ENCODE measurements at regions of chr17 and their contacts with region 1.

Region 1: DNA sequence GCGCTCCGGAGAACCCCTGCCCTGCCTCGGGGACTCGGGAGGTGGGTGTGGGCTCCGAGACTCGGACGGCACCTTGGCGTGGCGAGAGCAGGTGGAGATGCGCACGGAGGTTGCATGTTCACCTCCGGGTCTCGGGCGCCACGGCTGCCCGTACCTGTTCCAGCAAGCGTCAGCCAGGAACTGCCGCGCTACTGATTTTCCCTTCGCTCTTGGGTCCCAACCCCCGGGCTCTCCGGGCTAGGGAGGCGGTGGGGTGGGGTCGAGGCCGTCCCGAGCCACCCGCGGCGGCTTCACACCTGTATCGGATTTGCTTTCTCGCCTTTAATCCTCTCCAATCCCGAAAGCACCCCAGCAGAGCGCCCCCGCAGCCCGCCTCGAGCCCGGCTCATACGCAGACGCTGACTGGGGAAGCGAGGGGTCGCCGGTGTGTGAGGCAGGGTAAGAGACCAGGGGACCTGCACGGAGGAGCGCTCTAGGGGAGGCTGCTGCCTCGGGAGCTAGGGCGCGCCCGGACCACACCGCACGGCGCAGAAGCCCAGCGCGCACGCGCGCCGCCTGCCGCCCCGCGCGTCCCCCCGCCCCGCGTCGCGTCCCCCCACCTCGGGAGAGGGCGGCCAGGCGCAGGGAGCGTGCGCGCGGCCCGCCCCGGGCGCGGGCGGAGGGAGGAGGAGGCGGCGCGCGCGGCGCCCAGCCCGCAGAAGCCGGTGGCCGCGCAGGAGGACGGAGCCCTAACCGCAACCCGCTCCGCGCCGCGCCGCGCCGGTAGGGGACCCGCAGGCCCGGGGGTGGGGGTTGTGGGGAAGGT is at the start of gene DUSP14:
- DNase-seq: peak; percentile 65 to 74
- H3K4me3 ChIP-seq: peak within 1 kb of the TSS; percentile 83 to 90 (median 88)
- H3K27ac ChIP-seq: peak within 1 kb of the TSS; percentile 97 to 98
- H3K4me1 ChIP-seq: no peaks in the 10 kb centered on the region
- H3K27me3 ChIP-seq: no peaks in the 10 kb centered on the region
- CTCF ChIP-seq: no peak
- POLR2A ChIP-seq: peak; percentile 16
- total RNA-seq, gene DUSP14: 18.7 to 32.8 (median 24.6) TPM

Region 2: DNA sequence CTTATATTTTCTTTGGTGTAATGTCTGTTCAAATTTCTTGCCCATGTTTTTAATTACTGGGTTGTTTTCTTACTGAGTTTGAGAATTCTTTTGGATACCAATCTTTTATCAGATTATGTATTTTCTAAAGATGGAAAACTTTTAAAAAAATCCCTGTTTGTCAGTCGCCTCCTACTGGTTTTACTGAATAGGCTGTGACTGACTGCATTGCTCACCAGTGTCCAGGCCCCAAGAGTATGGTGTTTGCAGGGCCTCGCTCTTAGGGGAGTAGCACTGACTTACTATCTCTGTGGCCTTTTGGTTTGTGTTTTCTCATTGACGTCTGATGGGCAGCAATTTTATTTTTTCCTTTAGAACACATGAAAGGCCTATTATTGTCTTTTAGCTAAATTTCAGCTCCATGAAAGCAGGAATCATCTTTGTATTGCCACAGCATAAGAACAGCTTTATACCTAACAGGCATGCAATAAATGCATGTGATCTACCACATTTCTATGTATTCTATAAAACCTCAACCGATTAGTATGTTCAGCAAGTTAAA is 352.3 kb before region 1 on chr17:
- intact Hi-C with region 1: no loop called
- DNase-seq: no peak
- H3K4me3 ChIP-seq: no peak overlapping the region
- H3K27ac ChIP-seq: no peak overlapping the region
- H3K4me1 ChIP-seq: no peaks in the 10 kb centered on the region
- H3K27me3 ChIP-seq: no peaks in the 10 kb centered on the region
- CTCF ChIP-seq: peak in 1 of 3 donors; percentile 11
- POLR2A ChIP-seq: no peak

Region 3: DNA sequence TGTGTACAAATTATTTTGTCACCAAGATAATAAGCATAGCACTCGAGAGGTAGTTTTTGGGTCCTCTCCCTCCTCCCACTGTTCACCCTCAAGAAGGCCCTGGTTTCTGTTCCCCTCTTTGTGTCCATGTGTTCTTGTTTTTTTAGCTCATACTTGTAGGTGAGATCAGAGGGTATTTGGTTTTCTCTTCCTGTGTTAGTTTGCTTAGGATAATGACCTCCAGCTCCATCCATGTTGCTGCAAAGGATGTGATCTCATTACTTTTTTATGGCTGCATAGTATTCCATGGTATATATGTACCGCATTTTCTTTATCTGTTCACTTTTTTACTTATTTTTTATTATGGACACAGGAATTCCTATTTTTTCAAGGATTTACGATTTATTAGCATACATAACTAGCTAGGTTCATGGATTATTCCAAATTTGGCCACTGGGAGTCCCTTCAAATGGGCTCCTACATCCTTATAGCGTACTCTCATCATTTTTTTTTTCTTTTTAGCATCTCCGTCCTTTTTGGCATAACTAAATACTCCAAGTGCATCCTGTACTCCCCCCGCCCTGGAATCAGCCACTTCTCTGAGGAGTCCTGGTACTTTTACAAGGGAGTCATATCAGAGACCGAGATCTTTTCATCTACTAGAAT is 75.4 kb before region 1 on chr17:
- intact Hi-C with region 1: loop called (anchors 5 kb)
- DNase-seq: no peak
- H3K4me3 ChIP-seq: no peak overlapping the region
- H3K27ac ChIP-seq: no peak overlapping the region
- H3K4me1 ChIP-seq: no peaks in the 10 kb centered on the region
- H3K27me3 ChIP-seq: no peaks in the 10 kb centered on the region
- CTCF ChIP-seq: no peak
- POLR2A ChIP-seq: no peak

Region 4: DNA sequence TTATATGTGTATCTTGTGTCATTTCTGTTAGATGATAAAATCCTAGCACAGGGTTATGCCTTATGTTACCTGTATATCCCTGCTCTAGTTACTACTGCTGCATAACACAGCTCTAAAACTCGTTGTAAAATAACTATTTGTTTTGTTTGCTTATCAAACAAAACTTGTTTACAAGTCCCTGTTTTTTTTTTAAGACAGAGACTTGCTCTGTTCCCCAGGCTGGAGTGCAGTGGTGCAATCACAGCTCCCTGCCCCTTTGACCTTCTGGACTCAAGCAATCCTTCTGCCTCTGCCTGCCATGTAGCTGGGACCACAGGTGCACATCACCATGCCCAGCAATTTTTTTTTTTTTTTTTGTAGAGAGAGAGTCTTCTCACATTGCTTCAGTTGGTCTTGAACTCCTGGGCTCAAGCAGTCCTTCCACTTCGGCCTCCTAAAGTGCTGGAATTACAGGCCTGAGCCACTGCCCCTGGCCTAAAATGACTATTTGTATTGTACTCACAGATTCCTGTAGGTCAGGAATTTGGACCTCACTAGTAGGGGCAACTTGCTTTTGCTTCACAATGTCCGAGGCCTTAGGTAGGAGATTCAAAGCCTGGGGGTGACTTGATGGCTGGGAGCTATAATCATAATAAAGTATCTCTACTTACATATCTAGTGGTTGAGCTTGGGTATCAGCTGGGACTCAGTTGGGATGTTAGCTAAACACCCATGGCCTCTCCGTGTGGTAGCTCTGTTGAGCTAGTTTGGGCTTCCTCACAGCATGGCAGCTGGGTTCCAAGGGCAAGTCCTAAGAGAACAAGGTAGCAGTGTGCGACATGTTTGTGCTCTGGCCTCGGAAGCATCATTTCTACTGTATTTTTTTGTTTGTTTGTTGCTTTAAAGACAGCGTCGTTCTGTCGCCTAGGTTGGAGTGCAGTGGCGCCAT is 12.9 kb after region 1 on chr17:
- intact Hi-C with region 1: no loop called
- DNase-seq: no peak
- H3K4me3 ChIP-seq: no peak overlapping the region
- H3K27ac ChIP-seq: no peak overlapping the region
- H3K4me1 ChIP-seq: peaks cover 0 to 3% of the 10 kb centered on the region in 2 donors
- H3K27me3 ChIP-seq: no peaks in the 10 kb centered on the region
- CTCF ChIP-seq: no peak
- POLR2A ChIP-seq: no peak

Measured in breast epithelium (tissue), 4 donors.